Calu3 (cell line): ENCODE measurements at regions of chr7 and their contacts with region 1.

Region 1: GRCh38 chr7:28573059-28573553 is 160.8 kb downstream of the CREB5 start:
- DNase-seq: peak; percentile 83
- H3K4me3 Mint-ChIP-seq: peak overlapping the region; percentile 39
- H3K27ac Mint-ChIP-seq: peak overlapping the region; percentile 48
- H3K4me1 Mint-ChIP-seq: peaks cover 39% of the 10 kb centered on the region
- H3K27me3 Mint-ChIP-seq: peaks cover 15% of the 10 kb centered on the region
- CTCF ChIP-seq: no peak

Region 2: GRCh38 chr7:28408960-28409715 is 164.0 kb before region 1 on chr7:
- CTCF ChIA-PET with region 1: interaction called, 3 read pairs
- intact Hi-C with region 1: loop called (anchors 2 kb)
- DNase-seq: peak; percentile 98
- H3K4me3 Mint-ChIP-seq: peak overlapping the region; percentile 83
- H3K27ac Mint-ChIP-seq: peak overlapping the region; percentile 88
- H3K4me1 Mint-ChIP-seq: peaks cover 41% of the 10 kb centered on the region
- H3K27me3 Mint-ChIP-seq: no peaks in the 10 kb centered on the region
- CTCF ChIP-seq: no peak

Region 3: DNA sequence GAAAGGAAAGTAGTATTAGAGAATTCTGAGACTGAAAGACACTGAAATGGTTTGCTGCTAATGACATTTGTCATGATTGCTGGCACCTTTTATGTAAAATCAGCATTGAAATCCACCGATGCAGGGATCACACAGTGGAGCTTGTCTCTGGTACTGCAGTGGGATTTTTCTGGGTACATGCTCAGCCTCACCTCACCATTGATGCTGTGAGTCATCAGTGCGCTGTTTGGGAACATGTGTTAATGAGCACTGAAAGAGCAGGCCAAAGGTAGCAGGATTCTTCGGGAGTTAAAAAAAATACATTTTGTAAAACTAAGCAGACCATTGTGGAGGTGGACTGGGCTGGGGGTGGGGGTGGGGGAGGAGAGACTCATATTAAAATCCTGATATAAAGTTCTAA is 14.1 kb after region 1 on chr7:
- CTCF ChIA-PET with region 1: interaction called, 3 read pairs
- intact Hi-C with region 1: loop called (anchors 1 kb)
- DNase-seq: peak; percentile 56
- H3K4me3 Mint-ChIP-seq: no peak overlapping the region
- H3K27ac Mint-ChIP-seq: peak overlapping the region; percentile 19
- H3K4me1 Mint-ChIP-seq: peaks cover 20% of the 10 kb centered on the region
- H3K27me3 Mint-ChIP-seq: peaks cover 14% of the 10 kb centered on the region
- CTCF ChIP-seq: no peak

Region 4: DNA sequence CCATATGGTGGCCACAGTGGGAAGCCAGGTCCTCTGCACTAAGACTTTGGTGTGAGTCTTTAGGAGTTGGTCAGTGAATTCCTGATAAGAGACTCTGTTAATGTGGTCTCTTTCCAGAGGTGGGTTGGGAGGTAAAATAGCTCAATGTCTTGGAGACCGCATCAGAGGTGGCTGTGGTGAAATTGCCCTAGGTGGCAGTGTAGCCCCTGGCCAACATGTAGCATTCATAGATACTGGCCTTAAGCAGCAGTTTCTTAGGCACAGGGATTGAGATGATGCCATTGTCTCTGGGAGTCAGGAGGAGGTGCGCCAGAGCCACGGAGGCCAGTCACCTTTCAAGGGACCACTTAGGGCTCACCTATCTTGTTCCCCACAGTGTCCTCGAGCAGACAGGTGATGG is 42.0 kb after region 1 on chr7:
- CTCF ChIA-PET with region 1: interaction called, 6 read pairs
- intact Hi-C with region 1: loop called (anchors 2 kb)
- DNase-seq: no peak
- H3K4me3 Mint-ChIP-seq: no peak overlapping the region
- H3K27ac Mint-ChIP-seq: no peak overlapping the region
- H3K4me1 Mint-ChIP-seq: peaks cover 60% of the 10 kb centered on the region
- H3K27me3 Mint-ChIP-seq: no peaks in the 10 kb centered on the region
- CTCF ChIP-seq: peak; percentile 19

Region 5: DNA sequence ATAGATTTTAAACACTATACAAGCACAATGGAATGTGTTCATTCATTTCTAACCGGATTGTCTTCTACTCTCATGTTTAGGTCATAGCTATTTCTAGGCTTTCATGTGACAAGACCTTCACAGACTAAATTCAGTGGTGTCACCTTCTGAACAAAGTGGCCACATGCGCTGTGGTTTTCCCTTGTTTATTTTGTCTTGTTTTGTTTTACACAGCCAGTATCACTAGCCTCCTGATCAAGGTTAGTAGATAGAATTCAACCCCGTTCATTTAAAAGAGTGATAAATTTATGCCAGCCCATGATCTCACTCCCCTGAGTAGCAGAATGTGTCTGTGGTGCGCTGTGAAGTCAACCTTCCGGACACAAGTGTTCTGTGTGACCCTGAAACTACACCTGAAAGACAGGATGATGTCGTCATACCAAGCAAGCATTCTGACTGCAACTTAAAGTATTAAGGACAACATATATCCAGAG is 48.3 kb after region 1 on chr7:
- CTCF ChIA-PET with region 1: interaction called, 4 read pairs
- intact Hi-C with region 1: loop called (anchors 2 kb)
- DNase-seq: peak; percentile 56
- H3K4me3 Mint-ChIP-seq: peak overlapping the region; percentile 51
- H3K27ac Mint-ChIP-seq: peak overlapping the region; percentile 94
- H3K4me1 Mint-ChIP-seq: peaks cover 74% of the 10 kb centered on the region
- H3K27me3 Mint-ChIP-seq: no peaks in the 10 kb centered on the region
- CTCF ChIP-seq: no peak

Region 6: DNA sequence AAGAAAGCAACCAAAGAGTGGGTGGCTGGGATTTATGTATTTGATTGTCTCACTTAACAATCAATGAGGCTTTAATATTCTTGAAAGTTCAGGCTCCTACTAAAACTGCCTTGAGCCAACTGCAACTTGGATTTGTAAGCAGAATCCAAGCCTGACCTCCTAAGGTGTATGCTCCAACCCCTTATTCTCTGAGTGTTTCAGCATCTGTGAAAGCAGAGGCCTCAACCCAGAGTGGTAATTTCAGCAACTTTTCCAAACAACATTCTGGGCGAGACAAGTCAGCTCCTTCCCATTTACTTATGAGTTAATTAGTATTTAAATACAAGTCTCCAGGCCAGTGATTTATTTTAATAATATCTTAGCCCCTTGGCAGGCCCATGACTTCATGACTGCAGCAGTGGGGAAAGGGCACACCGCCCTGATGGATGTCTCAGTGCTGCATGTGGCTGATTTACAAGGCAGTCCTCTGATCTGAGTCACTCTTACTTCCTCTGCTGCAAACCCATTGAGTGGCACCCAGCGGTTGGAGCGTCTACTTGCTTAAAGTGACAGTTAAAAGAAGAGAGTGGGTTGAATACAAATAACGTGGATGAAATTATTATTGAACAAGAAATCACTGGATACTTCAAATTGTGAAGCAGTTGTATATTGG is 176.0 kb after region 1 on chr7:
- CTCF ChIA-PET with region 1: no interaction called
- intact Hi-C with region 1: no loop called
- DNase-seq: peak; percentile 62
- H3K4me3 Mint-ChIP-seq: no peak overlapping the region
- H3K27ac Mint-ChIP-seq: peak overlapping the region; percentile 36
- H3K4me1 Mint-ChIP-seq: peaks cover 19% of the 10 kb centered on the region
- H3K27me3 Mint-ChIP-seq: no peaks in the 10 kb centered on the region
- CTCF ChIP-seq: no peak